ENCODE measurements at regions of chr12 and their contacts with region 1.

Region 1: DNA sequence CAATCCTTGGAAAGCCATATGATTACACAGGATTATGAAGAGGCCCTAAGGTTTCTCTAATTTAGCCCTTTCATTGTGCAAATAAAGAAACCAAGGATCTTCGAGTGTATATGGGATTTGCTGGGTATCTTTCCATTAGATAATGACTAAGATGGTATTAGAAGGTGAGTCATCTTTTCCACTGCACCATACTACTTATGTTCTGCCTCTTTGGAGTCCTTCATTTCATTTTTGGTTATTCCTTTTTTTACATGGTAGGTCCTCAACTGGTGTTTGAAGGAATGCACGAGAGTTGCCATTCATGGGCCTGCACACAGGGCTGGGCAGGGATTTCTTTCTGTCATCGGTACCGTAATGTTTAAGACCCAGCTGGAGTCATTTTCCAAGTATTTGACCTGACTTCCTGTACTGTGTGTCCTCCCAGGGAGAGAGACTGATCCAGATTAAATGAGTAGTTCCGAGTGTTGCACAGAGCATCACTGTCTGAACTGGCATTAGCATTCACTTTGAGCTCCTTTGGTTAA is 85.7 kb downstream of the BORCS5 start:
- DNase-seq: no peak
- H3K4me3 Mint-ChIP-seq: peak overlapping the region; percentile 21
- H3K27ac Mint-ChIP-seq: peak overlapping the region; percentile 91
- H3K4me1 Mint-ChIP-seq: peaks cover 64% of the 10 kb centered on the region
- H3K27me3 Mint-ChIP-seq: no peaks in the 10 kb centered on the region

Region 2: DNA sequence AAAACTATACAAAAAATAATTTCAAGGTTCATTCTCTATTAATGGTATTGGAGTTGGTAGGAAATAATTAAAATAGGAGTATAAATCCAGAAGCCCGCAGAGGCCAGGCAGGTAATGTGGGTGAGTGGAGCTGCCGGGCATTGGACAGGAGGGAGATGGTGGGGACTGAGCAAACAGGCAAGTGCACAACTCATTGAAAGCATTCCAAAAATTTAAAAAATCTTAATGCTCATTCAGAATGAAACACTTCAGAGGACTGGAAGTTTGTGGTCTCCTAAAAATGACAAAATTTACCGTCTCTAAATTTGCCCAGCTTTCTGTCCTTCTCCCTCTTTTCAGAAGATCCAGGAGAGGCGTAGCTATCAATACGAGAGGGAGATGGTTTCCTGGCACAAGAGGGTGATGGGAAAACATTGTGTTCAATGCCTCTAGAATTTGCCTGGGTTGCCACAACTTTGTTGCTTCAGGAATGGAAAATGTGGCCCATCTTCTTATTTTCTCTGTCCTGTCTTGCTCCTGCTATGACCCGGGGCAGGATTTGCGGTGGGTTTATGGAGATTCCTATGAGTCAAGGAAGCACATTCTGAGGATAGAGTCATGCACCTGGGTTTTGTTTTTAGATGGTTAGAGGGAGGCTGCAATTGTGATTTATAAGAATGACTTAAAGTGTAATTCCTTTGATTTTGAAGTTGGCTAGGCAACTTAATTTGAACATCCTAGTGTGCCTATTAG is 13.5 kb before region 1 on chr12:
- intact Hi-C with region 1: loop called (anchors 1 kb)
- DNase-seq: no peak
- H3K4me3 Mint-ChIP-seq: no peak overlapping the region
- H3K27ac Mint-ChIP-seq: peak overlapping the region; percentile 70
- H3K4me1 Mint-ChIP-seq: peaks cover 45% of the 10 kb centered on the region
- H3K27me3 Mint-ChIP-seq: no peaks in the 10 kb centered on the region

Region 3: DNA sequence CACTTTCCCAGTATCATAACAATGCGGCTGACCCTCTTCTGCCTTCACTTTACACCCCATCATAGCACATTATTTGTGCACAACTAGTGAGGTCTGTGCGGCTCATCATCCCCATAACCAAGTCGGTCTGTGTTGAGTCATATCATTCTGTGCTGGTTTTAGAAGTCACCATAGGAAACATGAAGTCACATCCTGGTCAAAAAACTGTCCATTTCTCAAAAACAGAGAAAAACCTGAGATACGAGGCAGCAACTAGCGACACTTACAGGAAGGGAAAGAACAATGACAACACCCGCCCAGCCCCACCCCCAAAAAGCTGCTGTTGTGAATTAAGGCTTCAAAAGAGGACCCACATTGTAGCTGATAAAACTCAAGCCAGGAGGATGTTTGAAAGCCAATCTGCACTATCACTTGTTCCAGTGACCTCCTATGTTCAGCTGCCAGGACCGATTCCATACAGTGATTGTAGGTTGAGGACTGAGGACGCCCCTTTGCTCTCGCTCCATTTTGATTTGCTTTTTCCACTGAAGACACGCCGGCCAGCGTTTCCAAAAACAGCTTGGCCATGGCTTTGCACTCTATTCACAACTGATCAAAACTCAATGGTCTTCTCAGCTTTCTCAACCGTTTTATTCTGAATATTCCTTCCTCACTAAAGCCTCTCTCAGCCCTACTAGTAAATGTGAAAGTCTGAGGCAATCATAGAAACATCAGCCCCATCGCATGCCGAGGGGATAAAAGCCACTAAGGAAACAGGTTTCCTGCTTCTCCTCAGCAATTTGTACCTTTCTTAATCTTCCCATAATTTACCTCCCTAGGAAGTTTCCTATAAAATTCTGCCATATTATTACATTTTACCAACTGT is 32.6 kb after region 1 on chr12:
- intact Hi-C with region 1: loop called (anchors 1 kb)
- DNase-seq: peak; percentile 90
- H3K4me3 Mint-ChIP-seq: peak overlapping the region; percentile 78
- H3K27ac Mint-ChIP-seq: peak overlapping the region; percentile 100
- H3K4me1 Mint-ChIP-seq: peaks cover 59% of the 10 kb centered on the region
- H3K27me3 Mint-ChIP-seq: no peaks in the 10 kb centered on the region

Region 4: GRCh38 chr12:12505544-12506495 is 63.2 kb after region 1 on chr12:
- intact Hi-C with region 1: loop called (anchors 1 kb)
- DNase-seq: peak; percentile 78
- H3K4me3 Mint-ChIP-seq: peak overlapping the region; percentile 64
- H3K27ac Mint-ChIP-seq: peak overlapping the region; percentile 94
- H3K4me1 Mint-ChIP-seq: peaks cover 63% of the 10 kb centered on the region
- H3K27me3 Mint-ChIP-seq: peaks cover 1% of the 10 kb centered on the region

Region 5: GRCh38 chr12:12716793-12717585 is 274.4 kb after region 1 on chr12 and contains the start of gene CDKN1B:
- intact Hi-C with region 1: loop called (anchors 5 kb)
- DNase-seq: peak; percentile 94
- H3K4me3 Mint-ChIP-seq: peak within 1 kb of the TSS; percentile 97
- H3K27ac Mint-ChIP-seq: peak within 1 kb of the TSS; percentile 99
- H3K4me1 Mint-ChIP-seq: peaks cover 57% of the 10 kb centered on the region
- H3K27me3 Mint-ChIP-seq: no peaks in the 10 kb centered on the region
- total RNA-seq, gene CDKN1B: 47.4 and 48.5 TPM in 2 replicates